ENCODE measurements at regions of chr3 and their contacts with region 1.

Region 1: GRCh38 chr3:183149901-183150750 is 12.4 kb downstream of the LAMP3 start:
- DNase-seq: no peak
- ATAC-seq: no peak
- H3K4me3 Mint-ChIP-seq: no peak overlapping the region
- H3K27ac Mint-ChIP-seq: no peak overlapping the region
- H3K4me1 Mint-ChIP-seq: peaks cover 7% of the 10 kb centered on the region
- H3K27me3 Mint-ChIP-seq: peaks cover 78% of the 10 kb centered on the region
- CTCF ChIP-seq: no peak

Region 2: DNA sequence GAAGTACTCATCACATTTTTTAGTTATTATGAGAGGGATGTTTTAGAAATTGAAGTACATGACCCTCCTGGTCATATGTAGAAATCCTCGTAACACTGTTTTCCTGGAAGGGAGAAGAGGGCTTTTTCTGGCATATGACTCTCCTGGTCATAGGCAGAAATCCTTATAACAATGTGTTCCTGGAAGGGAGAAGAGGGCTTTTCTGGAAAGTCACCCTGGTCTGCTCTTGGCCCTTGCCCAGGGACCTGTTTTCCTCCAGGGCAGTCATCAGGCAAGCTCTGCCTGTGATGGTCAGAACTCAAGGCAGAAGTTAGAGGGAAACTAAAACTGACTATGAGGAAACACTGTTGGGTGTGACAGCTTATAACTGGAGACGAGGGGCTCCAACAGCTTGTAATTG is 15.3 kb before region 1 on chr3:
- CTCF ChIA-PET with region 1: no interaction called
- POLR2A ChIA-PET with region 1: interaction called, 10 read pairs
- intact Hi-C with region 1: no loop called
- DNase-seq: no peak
- ATAC-seq: no peak
- H3K4me3 Mint-ChIP-seq: no peak overlapping the region
- H3K27ac Mint-ChIP-seq: no peak overlapping the region
- H3K4me1 Mint-ChIP-seq: no peaks in the 10 kb centered on the region
- H3K27me3 Mint-ChIP-seq: peaks cover 61% of the 10 kb centered on the region
- CTCF ChIP-seq: no peak